ENCODE measurements at regions of chr3 and their contacts with region 1.

Region 1: DNA sequence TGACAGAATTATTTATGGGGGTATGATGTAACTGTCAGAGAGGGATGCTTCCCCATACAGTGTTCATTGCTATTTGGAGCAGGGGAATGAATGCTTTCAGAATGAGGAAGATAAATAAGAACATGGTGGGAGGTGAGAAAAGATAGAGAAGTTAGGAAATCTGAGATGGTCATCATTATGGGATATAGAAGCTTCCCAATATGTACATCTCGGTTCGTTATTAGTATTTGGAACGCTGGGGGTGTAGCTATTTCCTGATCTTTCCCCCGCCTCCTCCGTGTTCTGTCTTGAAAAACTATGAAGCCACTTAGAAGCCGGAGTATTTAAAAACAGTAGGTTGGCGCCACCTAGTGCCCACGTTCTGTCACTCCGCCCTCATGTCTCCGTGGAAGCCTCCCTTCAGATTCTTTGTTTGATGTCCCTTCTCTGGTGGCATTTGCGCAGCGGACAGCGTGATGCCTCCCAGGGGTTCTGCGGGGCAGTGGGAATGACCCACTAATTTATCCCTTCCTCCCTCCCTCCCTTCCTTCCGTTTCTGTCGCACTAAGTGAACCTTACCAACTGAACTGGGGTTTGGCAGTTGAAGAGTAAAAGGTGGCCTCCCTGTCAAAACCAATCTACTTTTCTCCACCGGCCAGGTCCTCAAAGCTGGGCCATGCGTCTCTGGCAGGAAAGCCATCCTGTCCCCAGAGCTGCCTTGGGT is 184.5 kb downstream of the FEZF2 start:
- DNase-seq: peak; percentile 70
- H3K4me3 Mint-ChIP-seq: no peak overlapping the region
- H3K27ac Mint-ChIP-seq: no peak overlapping the region
- H3K4me1 Mint-ChIP-seq: peaks cover 15% of the 10 kb centered on the region
- H3K27me3 Mint-ChIP-seq: no peaks in the 10 kb centered on the region
- CTCF ChIP-seq: peak; percentile 72

Region 2: GRCh38 chr3:61251174-61251972 is 937.5 kb before region 1 on chr3 and contains the start of gene FHIT:
- CTCF ChIA-PET with region 1: interaction called, 4 read pairs
- POLR2A ChIA-PET with region 1: no interaction called
- intact Hi-C with region 1: loop called (anchors 10 kb)
- DNase-seq: peak; percentile 96
- H3K4me3 Mint-ChIP-seq: peak within 1 kb of the TSS; percentile 95
- H3K27ac Mint-ChIP-seq: peak within 1 kb of the TSS; percentile 95
- H3K4me1 Mint-ChIP-seq: peaks cover 19% of the 10 kb centered on the region
- H3K27me3 Mint-ChIP-seq: no peaks in the 10 kb centered on the region
- CTCF ChIP-seq: no peak
- total RNA-seq, gene FHIT: 18.7 and 20.1 TPM in 2 replicates

Region 3: GRCh38 chr3:61561374-61562041 is 627.3 kb before region 1 on chr3 and contains the start of gene PTPRG:
- CTCF ChIA-PET with region 1: interaction called, 7 read pairs
- POLR2A ChIA-PET with region 1: no interaction called
- intact Hi-C with region 1: loop called (anchors 2 kb)
- DNase-seq: peak; percentile 94
- H3K4me3 Mint-ChIP-seq: peak within 1 kb of the TSS; percentile 91
- H3K27ac Mint-ChIP-seq: peak within 1 kb of the TSS; percentile 94
- H3K4me1 Mint-ChIP-seq: peaks cover 19% of the 10 kb centered on the region
- H3K27me3 Mint-ChIP-seq: no peaks in the 10 kb centered on the region
- CTCF ChIP-seq: no peak
- total RNA-seq, gene PTPRG: 47.9 and 54.5 TPM in 2 replicates

Region 4: DNA sequence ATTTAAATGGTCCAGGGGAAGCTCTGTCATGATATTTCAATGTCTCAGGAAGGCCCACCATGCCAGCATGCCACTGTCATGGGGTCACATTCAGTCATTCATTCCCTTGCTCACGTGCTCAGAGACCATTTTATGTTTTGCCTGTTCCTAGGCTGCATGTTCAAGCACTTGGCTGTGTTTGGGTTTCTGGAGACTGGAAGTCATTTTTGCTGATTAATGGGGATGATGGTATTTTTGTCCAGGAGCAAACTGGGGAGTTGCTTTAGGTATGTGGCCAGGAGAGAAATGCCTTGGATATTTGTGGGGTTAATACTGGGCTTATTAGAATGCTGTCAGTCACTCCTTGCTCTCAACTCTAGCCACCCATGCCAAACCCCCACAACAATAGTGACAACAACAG is 323.9 kb before region 1 on chr3:
- CTCF ChIA-PET with region 1: interaction called, 34 read pairs
- POLR2A ChIA-PET with region 1: no interaction called
- intact Hi-C with region 1: no loop called
- DNase-seq: no peak
- H3K4me3 Mint-ChIP-seq: no peak overlapping the region
- H3K27ac Mint-ChIP-seq: no peak overlapping the region
- H3K4me1 Mint-ChIP-seq: peaks cover 12% of the 10 kb centered on the region
- H3K27me3 Mint-ChIP-seq: no peaks in the 10 kb centered on the region
- CTCF ChIP-seq: no peak

Region 5: DNA sequence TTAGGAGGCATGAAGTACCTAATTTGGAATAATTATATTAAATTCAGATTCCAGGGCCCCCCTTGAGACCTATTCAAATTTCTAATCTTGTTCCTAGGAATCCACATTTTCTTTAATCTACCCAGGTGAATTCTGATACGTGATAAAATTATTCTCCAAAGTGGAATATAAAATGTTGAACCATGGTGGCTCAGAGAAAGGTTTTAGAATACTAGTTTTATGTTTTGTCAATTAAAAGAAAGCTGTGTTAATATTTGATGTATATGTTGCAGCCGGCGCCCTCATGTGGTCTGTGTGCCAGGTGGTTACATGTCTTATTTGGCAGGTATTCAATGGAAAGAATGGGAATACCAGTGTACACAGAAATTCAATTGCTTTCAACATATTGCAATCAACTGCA is 137.3 kb before region 1 on chr3:
- CTCF ChIA-PET with region 1: interaction called, 11 read pairs
- POLR2A ChIA-PET with region 1: no interaction called
- intact Hi-C with region 1: loop called (anchors 10 kb)
- DNase-seq: peak; percentile 65
- H3K4me3 Mint-ChIP-seq: no peak overlapping the region
- H3K27ac Mint-ChIP-seq: no peak overlapping the region
- H3K4me1 Mint-ChIP-seq: peaks cover under 1% of the 10 kb centered on the region
- H3K27me3 Mint-ChIP-seq: no peaks in the 10 kb centered on the region
- CTCF ChIP-seq: peak; percentile 27

Region 6: GRCh38 chr3:62169906-62170660 is 18.7 kb before region 1 on chr3:
- CTCF ChIA-PET with region 1: interaction called, 36 read pairs
- POLR2A ChIA-PET with region 1: no interaction called
- intact Hi-C with region 1: no loop called
- DNase-seq: no peak
- H3K4me3 Mint-ChIP-seq: no peak overlapping the region
- H3K27ac Mint-ChIP-seq: no peak overlapping the region
- H3K4me1 Mint-ChIP-seq: peaks cover 4% of the 10 kb centered on the region
- H3K27me3 Mint-ChIP-seq: no peaks in the 10 kb centered on the region
- CTCF ChIP-seq: no peak

Measured in MCF 10A (cell line).